WTC11 (cell line): ENCODE measurements at regions of chr14 and their contacts with region 1.

Region 1: DNA sequence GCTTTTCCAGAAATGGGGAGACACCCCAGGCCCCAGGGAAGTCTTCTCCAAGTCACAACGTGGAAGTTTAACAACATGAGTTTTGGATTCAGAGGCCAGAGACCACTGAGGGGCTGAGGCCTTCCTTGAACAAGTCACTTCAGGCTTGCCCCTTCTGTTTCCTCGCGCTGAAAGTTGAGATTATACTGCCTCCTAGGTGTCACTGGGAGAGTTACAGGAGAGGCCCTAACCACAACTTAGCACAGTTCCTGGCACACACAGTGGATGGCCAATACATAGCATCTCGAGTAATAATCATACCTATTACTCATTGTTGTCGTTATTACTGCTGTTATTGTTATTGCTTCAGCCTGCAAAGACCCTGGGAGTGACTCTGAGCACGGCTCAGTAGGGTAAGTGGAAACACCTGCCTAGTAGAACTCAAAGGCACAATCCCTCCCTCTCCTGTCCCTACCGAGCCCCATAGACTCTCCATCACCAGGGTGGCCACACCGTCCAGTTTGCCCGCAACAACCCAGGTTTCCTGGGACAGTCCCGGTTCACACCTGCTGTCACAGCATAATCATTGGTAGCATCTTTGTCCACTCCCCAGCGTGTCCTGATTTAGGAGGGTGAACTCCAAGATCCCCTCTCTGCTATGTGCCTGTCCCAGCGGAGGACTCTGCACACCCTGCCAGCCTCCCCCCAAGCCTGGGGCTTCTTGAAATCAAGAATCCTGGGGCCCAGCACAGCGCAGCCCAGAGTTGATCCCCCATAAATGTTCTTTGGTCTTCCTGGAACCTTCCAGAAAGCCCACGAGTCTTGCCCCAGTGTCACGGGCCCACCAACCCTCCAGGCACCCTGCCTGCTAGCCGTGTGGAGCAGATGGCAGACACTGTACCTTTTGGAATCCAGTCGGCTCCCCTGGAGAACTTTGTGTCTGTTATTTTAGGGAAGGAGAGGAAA is 85.0 kb downstream of the SYNE3 start:
- DNase-seq: peak; percentile 43
- ATAC-seq: peak; percentile 85
- H3K4me3 Mint-ChIP-seq: no peak overlapping the region
- H3K27ac Mint-ChIP-seq: no peak overlapping the region
- H3K4me1 Mint-ChIP-seq: no peaks in the 10 kb centered on the region
- H3K27me3 Mint-ChIP-seq: no peaks in the 10 kb centered on the region; the same call in 1 of the 2 replicates
- CTCF ChIP-seq: no peak

Region 2: GRCh38 chr14:94689218-94689984 is 742.1 kb before region 1 on chr14:
- CTCF ChIA-PET with region 1: interaction called, 10 read pairs
- POLR2A ChIA-PET with region 1: no interaction called
- DNase-seq: peak; percentile 82
- ATAC-seq: peak; percentile 84
- H3K4me3 Mint-ChIP-seq: peak overlapping the region; percentile 38; the same call in 1 of the 2 replicates
- H3K27ac Mint-ChIP-seq: no peak overlapping the region
- H3K4me1 Mint-ChIP-seq: peaks cover 9% of the 10 kb centered on the region
- H3K27me3 Mint-ChIP-seq: peaks cover 24% of the 10 kb centered on the region
- CTCF ChIP-seq: peak; percentile 95

Region 3: GRCh38 chr14:95361373-95362137 is 69.9 kb before region 1 on chr14:
- CTCF ChIA-PET with region 1: interaction called, 15 read pairs
- POLR2A ChIA-PET with region 1: no interaction called
- DNase-seq: peak; percentile 81
- ATAC-seq: peak; percentile 94
- H3K4me3 Mint-ChIP-seq: peak overlapping the region; percentile 72
- H3K27ac Mint-ChIP-seq: peak overlapping the region; percentile 97
- H3K4me1 Mint-ChIP-seq: peaks cover 37% of the 10 kb centered on the region
- H3K27me3 Mint-ChIP-seq: peaks cover 15% of the 10 kb centered on the region
- CTCF ChIP-seq: peak; percentile 87

Region 4: DNA sequence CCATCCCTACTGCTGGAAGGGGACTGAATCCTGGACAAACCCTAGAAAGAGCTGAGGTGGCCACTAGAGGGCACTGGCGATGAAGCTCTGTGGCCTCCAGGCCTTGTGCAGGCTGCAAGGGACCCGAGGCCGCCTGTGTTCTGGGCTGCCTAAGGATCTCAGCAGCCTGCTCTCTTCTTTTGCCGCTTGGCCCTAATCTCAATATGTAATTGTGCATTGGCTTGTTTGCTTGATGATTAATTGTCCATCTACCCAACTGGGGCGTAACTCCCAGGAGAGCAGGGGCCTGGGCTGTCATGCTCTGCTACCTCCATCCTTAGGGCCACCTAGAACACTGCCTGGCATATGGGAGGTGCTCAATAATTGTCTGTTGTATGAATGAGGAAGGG is 11.2 kb after region 1 on chr14:
- CTCF ChIA-PET with region 1: interaction called, 34 read pairs
- POLR2A ChIA-PET with region 1: no interaction called
- DNase-seq: peak; percentile 83
- ATAC-seq: peak; percentile 94
- H3K4me3 Mint-ChIP-seq: no peak overlapping the region
- H3K27ac Mint-ChIP-seq: no peak overlapping the region
- H3K4me1 Mint-ChIP-seq: no peaks in the 10 kb centered on the region
- H3K27me3 Mint-ChIP-seq: no peaks in the 10 kb centered on the region
- CTCF ChIP-seq: peak; percentile 72

Region 5: GRCh38 chr14:95527387-95528002 is 96.0 kb after region 1 on chr14:
- CTCF ChIA-PET with region 1: interaction called, 13 read pairs
- POLR2A ChIA-PET with region 1: no interaction called
- DNase-seq: no peak
- ATAC-seq: peak; percentile 65
- H3K4me3 Mint-ChIP-seq: no peak overlapping the region
- H3K27ac Mint-ChIP-seq: no peak overlapping the region; the same call in 1 of the 2 replicates
- H3K4me1 Mint-ChIP-seq: peaks cover 21% of the 10 kb centered on the region
- H3K27me3 Mint-ChIP-seq: no peaks in the 10 kb centered on the region
- CTCF ChIP-seq: peak; percentile 63

Region 6: GRCh38 chr14:95545179-95546168 is 114.0 kb after region 1 on chr14:
- CTCF ChIA-PET with region 1: no interaction called
- POLR2A ChIA-PET with region 1: no interaction called
- DNase-seq: no peak
- ATAC-seq: no peak
- H3K4me3 Mint-ChIP-seq: no peak overlapping the region
- H3K27ac Mint-ChIP-seq: no peak overlapping the region
- H3K4me1 Mint-ChIP-seq: peaks cover 11% of the 10 kb centered on the region
- H3K27me3 Mint-ChIP-seq: no peaks in the 10 kb centered on the region
- CTCF ChIP-seq: no peak

Region 7: GRCh38 chr14:95561001-95561412 is 129.5 kb after region 1 on chr14:
- CTCF ChIA-PET with region 1: no interaction called
- POLR2A ChIA-PET with region 1: no interaction called
- DNase-seq: peak; percentile 96
- ATAC-seq: peak; percentile 89
- H3K4me3 Mint-ChIP-seq: no peak overlapping the region
- H3K27ac Mint-ChIP-seq: no peak overlapping the region
- H3K4me1 Mint-ChIP-seq: peaks cover 36% of the 10 kb centered on the region
- H3K27me3 Mint-ChIP-seq: peaks cover 35% of the 10 kb centered on the region
- CTCF ChIP-seq: peak; percentile 96